ENCODE measurements at regions of chr3 and their contacts with region 1.

Region 1: GRCh38 chr3:114745322-114746240 is 401.5 kb downstream of the ZBTB20 start:
- DNase-seq: no peak
- H3K4me3 ChIP-seq: peak overlapping the region in 2 of 4 donors; percentile 19 to 24
- H3K27ac ChIP-seq: peak overlapping the region; percentile 43 to 80 (median 68)
- H3K4me1 ChIP-seq: peaks cover 0 to 27% (median 15%) of the 10 kb centered on the region in 4 donors
- H3K27me3 ChIP-seq: no peaks in the 10 kb centered on the region
- CTCF ChIP-seq: no peak
- EP300 ChIP-seq: no peak
- POLR2A ChIP-seq: no peak

Region 2: GRCh38 chr3:114709102-114709501 is 36.5 kb before region 1 on chr3:
- in situ Hi-C with region 1: no loop called
- intact Hi-C with region 1: no loop called
- DNase-seq: no peak
- H3K4me3 ChIP-seq: no peak overlapping the region
- H3K27ac ChIP-seq: no peak overlapping the region
- H3K4me1 ChIP-seq: peaks cover 0 to 18% (median under 1%) of the 10 kb centered on the region in 4 donors
- H3K27me3 ChIP-seq: no peaks in the 10 kb centered on the region
- CTCF ChIP-seq: no peak
- EP300 ChIP-seq: no peak
- POLR2A ChIP-seq: no peak

Region 3: GRCh38 chr3:114732353-114732752 is 13.2 kb before region 1 on chr3:
- in situ Hi-C with region 1: no loop called
- intact Hi-C with region 1: loop called (anchors 1 kb)
- DNase-seq: no peak
- H3K4me3 ChIP-seq: no peak overlapping the region
- H3K27ac ChIP-seq: no peak overlapping the region
- H3K4me1 ChIP-seq: peaks cover 0 to 13% (median 0%) of the 10 kb centered on the region in 4 donors
- H3K27me3 ChIP-seq: no peaks in the 10 kb centered on the region
- CTCF ChIP-seq: no peak
- EP300 ChIP-seq: no peak
- POLR2A ChIP-seq: no peak

Region 4: GRCh38 chr3:115330430-115330829 is 584.8 kb after region 1 on chr3:
- in situ Hi-C with region 1: no loop called
- intact Hi-C with region 1: no loop called
- DNase-seq: no peak
- H3K4me3 ChIP-seq: no peak overlapping the region
- H3K27ac ChIP-seq: no peak overlapping the region
- H3K4me1 ChIP-seq: no peaks in the 10 kb centered on the region
- H3K27me3 ChIP-seq: no peaks in the 10 kb centered on the region
- CTCF ChIP-seq: no peak
- EP300 ChIP-seq: no peak
- POLR2A ChIP-seq: no peak

Measured in transverse colon (tissue), 4 donors.